B cell (primary cell): ENCODE measurements at regions of chr3 and their contacts with region 1.

Region 1: DNA sequence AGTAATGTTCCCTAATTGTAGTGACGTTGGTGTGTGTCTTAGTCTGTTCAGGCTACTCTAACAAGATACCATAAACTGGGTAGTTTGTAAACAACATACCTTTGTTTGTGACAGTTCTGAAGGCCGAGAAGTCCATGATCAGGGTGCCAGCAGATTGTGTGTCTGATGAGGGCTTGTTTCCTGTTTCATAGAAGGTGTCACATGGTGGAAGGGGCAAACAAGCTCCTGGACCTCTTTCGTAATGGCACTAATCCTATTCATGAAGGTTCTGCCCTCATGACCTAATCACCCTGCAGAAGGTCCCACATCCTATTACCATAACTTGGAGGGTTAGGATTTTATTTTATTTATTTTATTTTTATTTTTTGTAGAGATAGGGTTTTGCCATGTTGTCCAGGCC is 11.1 kb downstream of the ATXN7 start:
- DNase-seq: no peak
- ATAC-seq: no peak
- H3K4me3 ChIP-seq: no peak overlapping the region
- H3K4me3 Mint-ChIP-seq: no peak overlapping the region
- H3K27ac ChIP-seq: no peak overlapping the region
- H3K27ac Mint-ChIP-seq: no peak overlapping the region
- H3K4me1 ChIP-seq: peaks cover 14 to 19% of the 10 kb centered on the region in 2 donors
- H3K4me1 Mint-ChIP-seq: peaks cover 62% of the 10 kb centered on the region
- H3K27me3 ChIP-seq: no peaks in the 10 kb centered on the region
- H3K27me3 Mint-ChIP-seq: no peaks in the 10 kb centered on the region
- CTCF ChIP-seq: no peak

Region 2: DNA sequence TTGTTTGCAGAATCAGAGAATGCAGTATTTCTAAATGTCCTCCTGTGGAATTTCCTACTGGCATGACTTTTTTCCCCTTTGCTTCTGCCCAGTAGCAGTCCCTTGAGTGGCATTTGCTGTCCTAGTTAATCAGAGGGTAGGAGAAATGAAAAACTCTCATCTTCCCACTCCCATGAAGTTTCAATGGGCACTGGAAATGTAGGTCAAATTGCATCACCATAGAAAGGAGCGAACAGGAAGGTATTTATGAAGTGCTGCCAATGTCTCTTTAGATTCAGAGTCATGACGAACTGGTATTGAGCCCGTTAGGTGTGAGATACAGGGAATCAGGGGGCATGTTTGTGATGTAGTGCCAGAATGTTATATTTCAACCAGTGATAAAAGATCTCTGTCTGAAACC is 12.1 kb after region 1 on chr3:
- CTCF ChIA-PET with region 1: interaction called, 5 read pairs
- POLR2A ChIA-PET with region 1: no interaction called
- intact Hi-C with region 1: loop called (anchors 2 kb)
- DNase-seq: no peak
- ATAC-seq: no peak
- H3K4me3 ChIP-seq: no peak overlapping the region
- H3K4me3 Mint-ChIP-seq: no peak overlapping the region
- H3K27ac ChIP-seq: no peak overlapping the region
- H3K27ac Mint-ChIP-seq: no peak overlapping the region
- H3K4me1 ChIP-seq: no peaks in the 10 kb centered on the region
- H3K4me1 Mint-ChIP-seq: peaks cover 32% of the 10 kb centered on the region
- H3K27me3 ChIP-seq: no peaks in the 10 kb centered on the region
- H3K27me3 Mint-ChIP-seq: no peaks in the 10 kb centered on the region
- CTCF ChIP-seq: no peak